ENCODE measurements at regions of chr6 and their contacts with region 1.

Region 1: DNA sequence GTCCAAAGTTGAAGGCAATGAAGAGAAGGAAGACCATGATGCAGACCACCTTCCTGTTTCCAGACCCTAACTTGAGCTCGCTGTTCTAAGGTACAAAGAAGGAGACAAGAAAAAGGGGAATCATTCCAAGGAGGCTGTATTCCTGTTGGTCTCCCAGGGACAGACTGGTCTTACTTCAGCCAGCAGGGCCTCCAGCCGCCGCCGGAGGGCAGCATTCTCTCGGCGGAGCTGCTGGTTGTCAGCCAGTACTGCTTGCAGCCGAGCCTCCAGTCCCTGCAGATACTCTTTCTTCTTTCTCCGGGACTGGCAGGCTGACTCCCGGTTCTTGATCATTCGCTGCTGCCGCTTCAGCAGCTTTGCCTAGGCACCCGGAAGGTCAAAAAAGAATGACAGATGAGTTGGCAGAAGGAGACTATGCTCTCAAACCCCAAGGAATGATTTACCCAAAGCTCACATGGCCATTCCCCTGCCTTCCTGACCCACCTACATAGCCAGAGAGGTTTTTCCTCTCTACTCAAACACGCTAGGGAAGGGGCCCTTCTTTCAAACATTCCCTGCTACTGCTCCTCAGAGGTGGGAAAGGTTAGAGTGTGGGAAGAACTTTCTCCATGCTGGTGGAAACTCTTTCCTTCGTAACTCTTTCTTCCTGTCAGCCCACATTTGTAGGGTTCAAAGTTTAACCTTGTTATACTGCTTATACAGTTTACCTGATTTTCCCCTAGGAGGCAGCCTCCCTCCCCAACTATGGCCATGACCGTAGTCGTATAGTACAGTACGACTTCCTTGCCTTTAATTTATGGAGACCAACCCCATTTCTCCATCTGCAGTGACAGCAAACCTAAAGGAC is 9.0 kb downstream of the ATF6B start:
- DNase-seq: peak; percentile 86 to 92 (median 87)
- ATAC-seq: peak; percentile 76 to 81 (median 80)
- H3K4me3 ChIP-seq: peak overlapping the region in 1 of 12 donors; percentile 16
- H3K27ac ChIP-seq: peak overlapping the region in 9 of 12 donors; percentile 7 to 66 (median 50)
- H3K4me1 ChIP-seq: peaks cover 0 to 27% (median 19%) of the 10 kb centered on the region in 12 donors
- H3K27me3 ChIP-seq: no peaks in the 10 kb centered on the region
- CTCF ChIP-seq: peak; percentile 90 to 99 (median 94)
- POLR2A ChIP-seq: no peak

Region 2: GRCh38 chr6:32047850-32048766 is 70.9 kb before region 1 on chr6:
- intact Hi-C with region 1: loop called in 1 of 10 experiments (anchors 10 kb)
- DNase-seq: peak; percentile 64 to 85 (median 75)
- ATAC-seq: peak; percentile 23 to 63 (median 55)
- H3K4me3 ChIP-seq: peak overlapping the region in 1 of 12 donors; percentile 5
- H3K27ac ChIP-seq: peak overlapping the region in 11 of 12 donors; percentile 3 to 88 (median 74)
- H3K4me1 ChIP-seq: peaks cover 0 to 34% (median 24%) of the 10 kb centered on the region in 12 donors
- H3K27me3 ChIP-seq: no peaks in the 10 kb centered on the region
- CTCF ChIP-seq: peak; percentile 76 to 93 (median 80)
- POLR2A ChIP-seq: no peak

Region 3: DNA sequence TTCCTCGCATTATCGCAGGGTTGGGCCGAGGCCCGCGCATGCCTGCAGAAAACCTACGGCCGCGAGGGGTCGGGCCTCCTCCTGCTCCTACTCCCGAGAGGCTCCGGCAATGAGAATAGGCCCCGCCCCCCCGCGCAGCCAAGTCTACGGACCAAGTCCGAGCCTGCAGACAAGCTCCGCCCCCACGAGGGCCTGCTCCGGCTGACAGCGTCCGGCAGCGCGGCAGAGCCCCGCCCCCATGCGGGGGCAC is 76.6 kb after region 1 on chr6:
- intact Hi-C with region 1: loop called in 2 of 10 experiments (anchors 5 kb)
- DNase-seq: peak; percentile 100
- ATAC-seq: peak in 3 of 4 donors; percentile 85 to 93 (median 86)
- H3K4me3 ChIP-seq: peak overlapping the region in 10 of 12 donors; percentile 65 to 93 (median 76)
- H3K27ac ChIP-seq: peak overlapping the region; percentile 92 to 100 (median 100)
- H3K4me1 ChIP-seq: peaks cover 7 to 61% (median 39%) of the 10 kb centered on the region in 12 donors
- H3K27me3 ChIP-seq: no peaks in the 10 kb centered on the region
- CTCF ChIP-seq: peak; percentile 48 to 73 (median 56)
- POLR2A ChIP-seq: no peak

Region 4: GRCh38 chr6:32413427-32414047 is 294.5 kb after region 1 on chr6:
- intact Hi-C with region 1: loop called in 1 of 10 experiments (anchors 10 kb)
- DNase-seq: peak; percentile 77 to 91 (median 78)
- ATAC-seq: peak in 3 of 4 donors; percentile 69 to 89 (median 85)
- H3K4me3 ChIP-seq: no peak overlapping the region
- H3K27ac ChIP-seq: no peak overlapping the region
- H3K4me1 ChIP-seq: peaks cover 0 to 17% (median 0%) of the 10 kb centered on the region in 12 donors
- H3K27me3 ChIP-seq: peaks cover 0 to 65% (median 11%) of the 10 kb centered on the region in 9 donors
- CTCF ChIP-seq: peak; percentile 88 to 97 (median 94)
- POLR2A ChIP-seq: no peak

Measured in heart left ventricle (tissue), 16 donors.